ENCODE measurements at regions of chr7 and their contacts with region 1.

Region 1: GRCh38 chr7:69309601-69310000 is 288.7 kb upstream of the AUTS2 start:
- DNase-seq: no peak
- H3K4me3 ChIP-seq: no peak overlapping the region
- H3K27ac ChIP-seq: no peak overlapping the region
- H3K4me1 ChIP-seq: no peaks in the 10 kb centered on the region
- H3K27me3 ChIP-seq: no peaks in the 10 kb centered on the region
- CTCF ChIP-seq: no peak

Region 2: GRCh38 chr7:69018200-69018599 is 291.4 kb before region 1 on chr7:
- CTCF ChIA-PET with region 1: no interaction called
- POLR2A ChIA-PET with region 1: no interaction called
- intact Hi-C with region 1: no loop called
- DNase-seq: no peak
- H3K4me3 ChIP-seq: no peak overlapping the region
- H3K27ac ChIP-seq: no peak overlapping the region
- H3K4me1 ChIP-seq: no peaks in the 10 kb centered on the region
- H3K27me3 ChIP-seq: no peaks in the 10 kb centered on the region
- CTCF ChIP-seq: 0 out of 2 replicates have a peak, but pooled peaks have one; percentile 10

Region 3: DNA sequence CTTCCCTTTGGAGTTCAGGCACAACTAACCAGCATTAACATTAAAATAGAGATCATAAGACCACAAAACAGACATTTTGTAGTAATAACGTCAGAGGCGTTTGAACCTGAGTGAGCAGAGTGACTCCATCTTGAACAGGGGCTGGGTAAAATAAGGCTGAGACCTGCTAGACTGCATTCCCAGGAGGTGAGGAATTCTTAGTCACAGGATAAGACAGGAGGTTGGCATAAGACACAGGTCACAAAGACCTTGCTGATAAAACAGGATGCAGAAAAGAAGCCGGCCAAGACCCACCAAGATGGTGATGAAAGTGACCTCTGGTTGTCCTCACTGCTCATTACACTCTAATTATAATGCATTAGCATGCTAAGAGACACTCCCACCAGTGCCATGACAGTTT is 204.5 kb before region 1 on chr7:
- CTCF ChIA-PET with region 1: no interaction called
- POLR2A ChIA-PET with region 1: no interaction called
- intact Hi-C with region 1: no loop called
- DNase-seq: no peak
- H3K4me3 ChIP-seq: no peak overlapping the region
- H3K27ac ChIP-seq: no peak overlapping the region
- H3K4me1 ChIP-seq: no peaks in the 10 kb centered on the region
- H3K27me3 ChIP-seq: no peaks in the 10 kb centered on the region
- CTCF ChIP-seq: no peak

Region 4: GRCh38 chr7:69211739-69212138 is 97.9 kb before region 1 on chr7:
- CTCF ChIA-PET with region 1: no interaction called
- POLR2A ChIA-PET with region 1: no interaction called
- intact Hi-C with region 1: no loop called
- DNase-seq: no peak
- H3K4me3 ChIP-seq: no peak overlapping the region
- H3K27ac ChIP-seq: no peak overlapping the region
- H3K4me1 ChIP-seq: no peaks in the 10 kb centered on the region
- H3K27me3 ChIP-seq: no peaks in the 10 kb centered on the region
- CTCF ChIP-seq: peak; percentile 35

Region 5: DNA sequence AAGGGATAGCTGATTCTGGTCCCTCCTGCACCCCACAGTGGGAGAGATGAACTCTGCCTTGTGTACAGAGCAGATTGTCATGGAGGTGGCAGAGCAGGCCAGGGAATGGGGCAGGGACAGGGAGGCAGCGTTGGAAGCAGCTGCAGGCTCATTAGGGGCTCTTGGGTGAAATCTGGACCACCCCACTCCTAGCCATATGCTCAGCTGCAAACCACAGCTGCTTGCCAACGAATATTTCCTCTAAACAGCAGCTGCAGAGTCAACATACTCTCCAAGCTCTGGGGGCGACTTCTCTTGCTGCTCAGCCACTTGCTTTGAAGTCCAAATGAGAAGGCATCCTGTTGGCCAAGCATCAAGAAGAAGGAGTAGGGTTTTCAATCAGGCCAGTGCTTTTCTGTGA is 13.6 kb before region 1 on chr7:
- CTCF ChIA-PET with region 1: no interaction called
- POLR2A ChIA-PET with region 1: interaction called, 22 read pairs
- intact Hi-C with region 1: no loop called
- DNase-seq: no peak
- H3K4me3 ChIP-seq: no peak overlapping the region
- H3K27ac ChIP-seq: no peak overlapping the region
- H3K4me1 ChIP-seq: no peaks in the 10 kb centered on the region
- H3K27me3 ChIP-seq: no peaks in the 10 kb centered on the region
- CTCF ChIP-seq: no peak